ENCODE measurements at regions of chr12 and their contacts with region 1.

Region 1: GRCh38 chr12:6723607-6724396 is at the start of gene COPS7A:
- DNase-seq: peak; percentile 98 to 99 (median 99)
- ATAC-seq: peak; percentile 97 to 99 (median 98)
- H3K4me3 ChIP-seq: peak within 1 kb of the TSS; percentile 55 to 74 (median 68)
- H3K27ac ChIP-seq: peak within 1 kb of the TSS; percentile 58 to 82 (median 79)
- H3K4me1 ChIP-seq: peaks cover 0 to 13% (median 0%) of the 10 kb centered on the region in 4 donors
- H3K27me3 ChIP-seq: no peaks in the 10 kb centered on the region
- CTCF ChIP-seq: no peak
- POLR2A ChIP-seq: peak; percentile 67
- total RNA-seq, gene COPS7A: 26.7 to 49.5 (median 30.6) TPM

Region 2: DNA sequence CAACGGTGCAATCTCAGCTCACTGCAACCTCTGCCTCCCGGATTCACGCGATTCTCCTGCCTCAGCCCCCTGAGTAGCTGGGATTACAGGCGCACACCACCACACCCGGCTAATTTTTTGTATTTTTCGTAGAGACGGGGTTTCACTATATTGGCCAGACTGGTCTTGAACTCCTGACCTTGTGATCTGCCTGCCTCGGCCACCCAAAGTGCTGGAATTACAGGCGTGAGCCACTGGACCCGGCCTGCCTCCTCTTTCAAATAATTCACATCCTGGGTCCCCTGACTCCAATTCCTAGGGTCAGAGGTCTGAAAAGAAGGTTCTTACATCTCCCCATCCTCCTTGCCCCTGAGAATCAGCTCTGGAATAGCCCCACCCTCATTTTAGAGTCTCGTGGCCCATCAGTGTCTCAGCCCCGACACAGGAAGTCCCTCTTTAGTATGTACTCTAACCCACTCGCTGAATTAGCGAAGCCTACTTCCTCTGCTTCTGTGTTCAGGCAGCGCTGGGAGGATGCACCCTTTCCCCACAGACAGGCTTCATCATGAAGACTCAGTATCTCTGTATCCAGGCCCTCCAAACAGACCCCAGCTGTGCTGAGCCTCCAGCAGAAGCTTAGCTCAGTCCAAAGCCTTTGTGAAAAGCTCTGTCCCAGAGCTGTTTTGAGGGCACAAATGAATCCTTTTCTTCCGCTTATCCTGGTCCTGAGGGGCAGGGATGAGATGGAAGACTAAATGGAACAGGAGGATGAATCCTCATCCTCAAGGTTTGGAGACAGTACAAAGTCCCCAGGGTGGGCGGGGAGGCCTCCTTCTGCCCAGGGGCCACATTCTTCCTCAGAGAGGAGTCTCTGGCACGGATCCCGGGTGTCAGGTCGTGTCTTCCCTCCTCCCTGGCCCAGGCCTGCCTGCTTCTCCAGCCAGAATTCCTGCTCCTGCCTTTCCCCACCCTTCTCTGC is 91.5 kb before region 1 on chr12:
- intact Hi-C with region 1: no loop called
- DNase-seq: no peak
- ATAC-seq: peak; percentile 60 to 74 (median 72)
- H3K4me3 ChIP-seq: no peak overlapping the region
- H3K27ac ChIP-seq: peak overlapping the region in 2 of 3 donors; percentile 13 to 37
- H3K4me1 ChIP-seq: no peaks in the 10 kb centered on the region
- H3K27me3 ChIP-seq: no peaks in the 10 kb centered on the region
- CTCF ChIP-seq: no peak
- POLR2A ChIP-seq: no peak

Region 3: GRCh38 chr12:6653987-6654386 is 69.8 kb before region 1 on chr12:
- intact Hi-C with region 1: loop called in 1 of 2 experiments (anchors 10 kb)
- DNase-seq: no peak
- ATAC-seq: no peak
- H3K4me3 ChIP-seq: no peak overlapping the region
- H3K27ac ChIP-seq: no peak overlapping the region
- H3K4me1 ChIP-seq: peaks cover 0 to 10% (median 5%) of the 10 kb centered on the region in 4 donors
- H3K27me3 ChIP-seq: no peaks in the 10 kb centered on the region
- CTCF ChIP-seq: no peak
- POLR2A ChIP-seq: no peak

Region 4: DNA sequence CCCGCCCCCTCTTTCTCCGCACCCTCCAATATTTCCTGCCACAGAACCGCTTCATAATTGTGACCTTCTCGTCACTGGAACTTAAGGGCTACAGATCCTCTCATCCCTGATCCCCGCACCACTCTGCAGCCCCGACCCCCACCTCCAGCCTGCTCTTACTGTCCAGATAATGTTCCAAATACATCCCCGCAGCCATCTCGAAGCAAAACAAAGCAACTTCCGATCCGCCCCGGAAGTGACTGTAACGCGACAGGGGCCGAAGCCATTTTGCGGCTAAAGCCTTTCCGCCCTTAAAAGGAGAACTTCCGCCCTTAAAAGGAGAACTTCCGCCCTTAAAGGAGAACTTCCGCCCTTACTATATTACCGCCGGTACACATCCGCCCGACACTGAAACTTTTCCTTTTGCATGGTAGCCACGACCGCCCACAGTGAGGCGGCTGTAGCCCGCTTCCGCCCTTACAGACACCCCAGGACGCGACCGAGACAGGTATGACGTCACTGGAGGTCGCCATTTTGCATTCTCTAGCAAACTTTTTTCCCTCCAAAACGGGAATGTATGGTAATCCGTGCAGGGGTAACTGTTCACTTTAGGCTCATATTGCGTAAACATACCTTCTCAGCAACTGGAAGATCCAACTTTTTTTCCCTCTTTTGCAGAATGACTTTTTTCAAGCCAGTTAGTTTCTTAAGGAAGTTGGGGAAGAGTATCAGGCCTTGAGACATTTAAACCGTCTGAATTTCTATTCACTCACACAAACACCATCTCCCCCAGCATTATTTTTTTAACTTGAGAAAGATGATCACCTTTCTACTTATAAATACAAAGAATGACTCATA is 60.7 kb before region 1 on chr12 and contains the start of gene ING4:
- intact Hi-C with region 1: loop called (anchors 10 kb)
- DNase-seq: peak; percentile 95 to 98 (median 98)
- ATAC-seq: peak; percentile 99 to 100 (median 100)
- H3K4me3 ChIP-seq: peak within 1 kb of the TSS; percentile 55 to 71 (median 66)
- H3K27ac ChIP-seq: peak within 1 kb of the TSS; percentile 41 to 63 (median 51)
- H3K4me1 ChIP-seq: peaks cover 0 to 8% (median 4%) of the 10 kb centered on the region in 4 donors
- H3K27me3 ChIP-seq: no peaks in the 10 kb centered on the region
- CTCF ChIP-seq: no peak
- POLR2A ChIP-seq: no peak
- total RNA-seq, gene ING4: 10.6 to 20.0 (median 17.0) TPM

Measured in right lobe of liver (tissue), 6 donors.